ENCODE measurements at regions of chr1 and their contacts with region 1.

Region 1: DNA sequence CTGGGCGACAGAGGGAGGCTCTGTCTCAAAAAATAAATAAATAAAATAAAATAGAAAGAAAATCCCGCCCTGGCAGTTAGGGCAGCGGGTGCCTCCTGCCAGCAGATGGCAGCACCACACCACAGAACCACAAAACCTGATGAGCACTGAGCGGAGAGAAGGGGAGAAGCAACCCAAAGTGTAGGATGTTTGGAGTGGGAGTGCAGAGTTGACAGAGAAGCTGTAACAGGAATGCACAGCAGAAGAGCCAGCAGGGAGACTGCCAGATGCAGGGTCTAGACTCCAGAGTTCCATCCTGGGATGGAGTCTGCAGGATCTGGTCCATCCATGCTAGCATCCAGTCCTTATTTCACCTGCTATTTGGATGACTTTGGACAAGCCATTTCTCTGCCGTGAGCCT is 29.7 kb upstream of the KIRREL1 start:
- H3K4me3 Mint-ChIP-seq: no peak overlapping the region
- H3K27ac Mint-ChIP-seq: no peak overlapping the region
- H3K4me1 Mint-ChIP-seq: peaks cover 24% of the 10 kb centered on the region
- H3K27me3 Mint-ChIP-seq: peaks cover 35% of the 10 kb centered on the region

Region 2: DNA sequence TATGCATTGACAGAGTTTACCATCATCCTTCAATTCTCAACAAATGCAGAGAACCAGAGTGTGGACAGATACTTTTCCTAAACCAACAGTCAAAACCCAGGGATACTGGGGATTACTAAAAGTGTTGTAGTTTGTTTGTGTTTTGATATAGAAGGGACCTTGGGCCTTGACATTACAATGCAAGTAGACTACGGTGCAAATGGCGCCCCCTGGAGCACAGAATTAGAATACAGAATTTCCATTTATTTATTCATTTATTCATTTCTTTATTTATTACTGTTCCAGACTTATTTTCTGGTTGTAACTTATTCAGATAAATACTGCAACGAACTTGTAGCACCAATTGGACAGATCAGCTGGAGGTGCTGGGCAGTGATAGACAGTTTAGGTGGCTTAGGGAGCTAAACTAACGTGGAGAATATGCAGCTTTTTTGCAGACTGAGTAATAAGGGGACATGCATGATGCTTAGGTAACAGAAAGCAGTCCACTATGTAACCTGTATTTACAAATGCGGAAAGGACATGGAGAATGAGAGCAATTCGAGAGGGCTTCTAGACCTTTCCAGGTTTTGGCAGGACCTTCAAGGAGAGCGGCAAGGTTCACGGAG is 72.4 kb after region 1 on chr1:
- intact Hi-C with region 1: loop called (anchors 2 kb)
- H3K4me3 Mint-ChIP-seq: no peak overlapping the region
- H3K27ac Mint-ChIP-seq: no peak overlapping the region
- H3K4me1 Mint-ChIP-seq: peaks cover 10% of the 10 kb centered on the region
- H3K27me3 Mint-ChIP-seq: peaks cover 25% of the 10 kb centered on the region

Region 3: GRCh38 chr1:158049853-158050252 is 86.1 kb after region 1 on chr1:
- intact Hi-C with region 1: no loop called
- H3K4me3 Mint-ChIP-seq: no peak overlapping the region
- H3K27ac Mint-ChIP-seq: no peak overlapping the region
- H3K4me1 Mint-ChIP-seq: no peaks in the 10 kb centered on the region
- H3K27me3 Mint-ChIP-seq: peaks cover 14% of the 10 kb centered on the region

Region 4: GRCh38 chr1:158087320-158087927 is 123.7 kb after region 1 on chr1:
- intact Hi-C with region 1: loop called (anchors 1 kb)
- H3K4me3 Mint-ChIP-seq: no peak overlapping the region
- H3K27ac Mint-ChIP-seq: no peak overlapping the region
- H3K4me1 Mint-ChIP-seq: no peaks in the 10 kb centered on the region
- H3K27me3 Mint-ChIP-seq: peaks cover 10% of the 10 kb centered on the region

Region 5: GRCh38 chr1:158124999-158125398 is 161.3 kb after region 1 on chr1:
- intact Hi-C with region 1: loop called (anchors 1 kb)
- H3K4me3 Mint-ChIP-seq: no peak overlapping the region
- H3K27ac Mint-ChIP-seq: no peak overlapping the region
- H3K4me1 Mint-ChIP-seq: peaks cover 4% of the 10 kb centered on the region
- H3K27me3 Mint-ChIP-seq: peaks cover 37% of the 10 kb centered on the region

Region 6: GRCh38 chr1:158246650-158247049 is 282.9 kb after region 1 on chr1:
- intact Hi-C with region 1: no loop called
- H3K4me3 Mint-ChIP-seq: no peak overlapping the region
- H3K27ac Mint-ChIP-seq: no peak overlapping the region
- H3K4me1 Mint-ChIP-seq: peaks cover 71% of the 10 kb centered on the region
- H3K27me3 Mint-ChIP-seq: peaks cover 14% of the 10 kb centered on the region

Measured in dendritic cell treated with granulocyte-macrophage colony-stimulating factor and Interleukin-4, amounts not matched to agents 40 ng/mL and 50 ng/mL, for 4 days (primary cell).